Activated CD8-positive, alpha-beta T cell treated with anti-CD3 and anti-CD28 coated beads for 36 hours (primary cell): ENCODE measurements at regions of chr11 and their contacts with region 1.

Region 1: GRCh38 chr11:118689851-118690552 is 10.6 kb upstream of the TREH start:
- DNase-seq: peak; percentile 94
- ATAC-seq: peak; percentile 92
- H3K4me3 Mint-ChIP-seq: peak overlapping the region; percentile 73
- H3K27ac Mint-ChIP-seq: peak overlapping the region; percentile 86
- H3K4me1 Mint-ChIP-seq: peaks cover 52% of the 10 kb centered on the region
- H3K27me3 Mint-ChIP-seq: peaks cover 4% of the 10 kb centered on the region
- CTCF ChIP-seq: peak; percentile 99

Region 2: GRCh38 chr11:118666371-118666770 is 23.6 kb before region 1 on chr11:
- CTCF ChIA-PET with region 1: interaction called, 24 read pairs
- POLR2A ChIA-PET with region 1: no interaction called
- intact Hi-C with region 1: no loop called
- DNase-seq: no peak
- ATAC-seq: no peak
- H3K4me3 Mint-ChIP-seq: no peak overlapping the region
- H3K27ac Mint-ChIP-seq: no peak overlapping the region
- H3K4me1 Mint-ChIP-seq: peaks cover 4% of the 10 kb centered on the region
- H3K27me3 Mint-ChIP-seq: no peaks in the 10 kb centered on the region
- CTCF ChIP-seq: no peak

Region 3: DNA sequence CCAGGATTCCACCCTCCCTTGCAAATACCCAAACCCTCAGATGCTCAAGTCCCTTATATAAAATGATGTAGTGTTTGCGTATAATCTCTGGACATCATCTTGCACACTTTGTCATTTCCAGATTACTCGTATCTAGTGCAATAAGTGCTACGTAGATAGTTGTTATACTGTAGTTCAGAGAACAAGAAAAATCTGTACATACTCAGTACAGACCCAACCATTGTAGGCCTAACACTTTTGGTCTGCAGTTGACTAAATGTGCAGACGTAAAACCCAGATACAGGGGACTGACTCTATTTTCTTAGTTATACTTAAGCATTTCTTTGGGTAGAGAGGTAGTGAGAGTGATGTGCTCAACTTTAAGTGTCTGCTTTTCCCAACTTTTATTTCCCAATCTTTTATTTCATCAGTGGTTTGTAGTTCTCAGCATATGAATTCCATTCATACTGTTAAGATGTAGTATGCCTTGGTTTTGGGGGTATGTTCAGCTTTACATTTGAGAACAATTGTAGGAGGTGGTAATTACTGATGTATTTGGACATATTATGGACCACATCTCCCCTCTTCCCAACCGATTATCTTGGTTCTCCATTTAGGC is 57.1 kb after region 1 on chr11:
- CTCF ChIA-PET with region 1: interaction called, 12 read pairs
- POLR2A ChIA-PET with region 1: interaction called, 3 read pairs
- intact Hi-C with region 1: no loop called
- DNase-seq: no peak
- ATAC-seq: no peak
- H3K4me3 Mint-ChIP-seq: no peak overlapping the region
- H3K27ac Mint-ChIP-seq: no peak overlapping the region
- H3K4me1 Mint-ChIP-seq: peaks cover 5% of the 10 kb centered on the region
- H3K27me3 Mint-ChIP-seq: no peaks in the 10 kb centered on the region
- CTCF ChIP-seq: no peak

Region 4: GRCh38 chr11:118791111-118791965 is 101.3 kb after region 1 on chr11 and contains the start of gene DDX6:
- CTCF ChIA-PET with region 1: interaction called, 80 read pairs
- POLR2A ChIA-PET with region 1: interaction called, 14 read pairs
- intact Hi-C with region 1: loop called (anchors 5 kb)
- DNase-seq: peak; percentile 94
- ATAC-seq: peak; percentile 55
- H3K4me3 Mint-ChIP-seq: peak within 1 kb of the TSS; percentile 99
- H3K27ac Mint-ChIP-seq: peak within 1 kb of the TSS; percentile 100
- H3K4me1 Mint-ChIP-seq: peaks cover 17% of the 10 kb centered on the region
- H3K27me3 Mint-ChIP-seq: no peaks in the 10 kb centered on the region
- CTCF ChIP-seq: no peak
- total RNA-seq, gene DDX6: 155 to 158 TPM

Region 5: DNA sequence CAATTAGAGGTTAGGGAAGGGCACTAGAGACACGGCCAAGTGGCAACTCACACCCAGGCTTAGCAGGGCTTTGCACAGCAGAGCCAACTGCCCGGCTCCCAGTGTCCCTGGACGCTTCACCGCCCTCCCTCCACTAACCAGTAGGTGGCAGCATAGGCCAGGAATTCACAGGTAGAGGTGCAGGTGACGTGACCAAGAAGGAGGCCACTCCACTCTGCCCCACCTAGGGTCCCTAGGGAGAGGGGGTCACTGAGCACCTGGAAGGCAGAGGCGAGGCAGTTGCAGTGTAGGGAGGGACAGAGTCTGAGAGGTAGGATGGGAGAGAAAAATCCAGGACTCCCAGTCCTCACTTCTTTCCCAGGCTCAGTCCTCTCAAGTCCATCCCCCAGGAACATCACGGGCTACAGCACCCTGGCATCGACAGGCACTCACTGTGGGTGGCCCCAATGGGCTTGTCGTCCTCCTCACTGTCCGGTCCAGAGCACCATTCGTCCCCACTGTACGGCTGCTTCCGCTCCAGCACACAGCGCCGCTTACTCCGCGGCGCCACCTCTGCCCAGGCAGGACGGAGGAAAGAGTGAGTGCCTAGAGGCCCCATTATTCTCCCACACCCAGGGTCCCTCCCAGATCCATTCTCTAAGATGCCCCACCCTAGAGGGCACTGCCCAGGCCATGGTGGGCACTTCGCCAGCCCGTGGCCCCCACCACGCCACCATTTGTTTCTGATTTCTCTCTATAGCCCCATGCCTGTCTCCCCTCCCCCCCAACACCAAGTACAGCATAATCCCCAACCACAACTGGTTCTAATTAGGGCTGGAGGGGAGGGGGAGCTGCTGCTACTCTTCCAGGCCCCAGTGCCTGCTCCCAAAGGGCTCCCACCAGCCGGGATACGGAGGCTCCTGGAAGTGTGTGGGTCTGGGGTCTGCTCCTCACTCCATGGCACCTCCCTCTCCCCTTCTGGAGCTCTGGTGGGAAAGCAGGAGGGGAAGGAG is 217.3 kb after region 1 on chr11:
- CTCF ChIA-PET with region 1: interaction called, 12 read pairs
- POLR2A ChIA-PET with region 1: no interaction called
- intact Hi-C with region 1: no loop called
- DNase-seq: peak; percentile 92
- ATAC-seq: peak; percentile 61
- H3K4me3 Mint-ChIP-seq: no peak overlapping the region
- H3K27ac Mint-ChIP-seq: peak overlapping the region; percentile 85
- H3K4me1 Mint-ChIP-seq: peaks cover 46% of the 10 kb centered on the region
- H3K27me3 Mint-ChIP-seq: no peaks in the 10 kb centered on the region
- CTCF ChIP-seq: peak; percentile 86

Region 6: DNA sequence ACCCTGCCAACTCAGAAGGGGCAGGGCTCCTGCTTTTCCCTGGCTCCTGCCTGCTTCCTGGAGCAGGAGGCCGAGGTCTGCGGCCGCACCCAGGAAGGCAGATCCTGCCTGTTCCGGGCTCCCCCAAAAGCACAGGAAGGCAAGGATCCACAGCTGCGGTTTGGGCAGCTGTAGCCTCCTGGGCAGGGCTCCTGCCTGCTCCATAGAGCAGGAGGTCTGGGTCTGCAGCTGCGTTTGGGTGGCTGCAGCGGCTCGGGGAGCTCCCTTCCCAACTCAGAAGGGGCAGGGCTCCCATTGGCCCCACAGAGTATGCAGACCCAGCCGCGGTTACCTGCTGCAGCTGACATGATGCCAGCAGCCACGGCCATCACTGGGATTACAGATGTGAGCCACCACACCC is 271.6 kb after region 1 on chr11:
- CTCF ChIA-PET with region 1: interaction called, 23 read pairs
- POLR2A ChIA-PET with region 1: no interaction called
- intact Hi-C with region 1: no loop called
- DNase-seq: no peak
- ATAC-seq: no peak
- H3K4me3 Mint-ChIP-seq: no peak overlapping the region
- H3K27ac Mint-ChIP-seq: no peak overlapping the region
- H3K4me1 Mint-ChIP-seq: no peaks in the 10 kb centered on the region
- H3K27me3 Mint-ChIP-seq: no peaks in the 10 kb centered on the region
- CTCF ChIP-seq: no peak